A549 (cell line): ENCODE measurements at regions of chr15 and their contacts with region 1.

Region 1: GRCh38 chr15:89171136-89172072 is 50.0 kb downstream of the RLBP1 start:
- DNase-seq: peak; percentile 71 to 74
- ATAC-seq: peak; percentile 49 to 87
- H3K4me3 ChIP-seq: no peak overlapping the region
- H3K27ac ChIP-seq: peak overlapping the region in 1 of 2 experiments; percentile 22; a peak in 1 of 6 replicates
- H3K4me1 ChIP-seq: peaks cover 21% of the 10 kb centered on the region
- CTCF ChIP-seq: peak; percentile 95
- EP300 ChIP-seq: no peak
- POLR2A ChIP-seq: no peak
- RAD21 ChIP-seq: peak; percentile 86 to 94

Region 2: GRCh38 chr15:89017370-89018066 is 153.9 kb before region 1 on chr15:
- CTCF ChIA-PET with region 1: interaction called, 224 read pairs
- POLR2A ChIA-PET with region 1: no interaction called
- DNase-seq: peak; percentile 82 to 84
- ATAC-seq: peak; percentile 90 to 95
- H3K4me3 ChIP-seq: peak overlapping the region; percentile 37
- H3K27ac ChIP-seq: peak overlapping the region; percentile 68 to 79
- H3K4me1 ChIP-seq: peaks cover 17% of the 10 kb centered on the region
- CTCF ChIP-seq: peak; percentile 97
- EP300 ChIP-seq: no peak
- POLR2A ChIP-seq: no peak
- RAD21 ChIP-seq: peak; percentile 93 to 95

Region 3: GRCh38 chr15:89075846-89076245 is 95.6 kb before region 1 on chr15:
- CTCF ChIA-PET with region 1: interaction called, 28 read pairs
- POLR2A ChIA-PET with region 1: no interaction called
- DNase-seq: no peak
- ATAC-seq: no peak
- H3K4me3 ChIP-seq: no peak overlapping the region
- H3K27ac ChIP-seq: no peak overlapping the region
- H3K4me1 ChIP-seq: 0 out of 3 replicates have a peak, but pooled peaks cover 3% of the 10 kb centered on the region
- CTCF ChIP-seq: no peak
- EP300 ChIP-seq: no peak
- POLR2A ChIP-seq: no peak
- RAD21 ChIP-seq: no peak

Region 4: DNA sequence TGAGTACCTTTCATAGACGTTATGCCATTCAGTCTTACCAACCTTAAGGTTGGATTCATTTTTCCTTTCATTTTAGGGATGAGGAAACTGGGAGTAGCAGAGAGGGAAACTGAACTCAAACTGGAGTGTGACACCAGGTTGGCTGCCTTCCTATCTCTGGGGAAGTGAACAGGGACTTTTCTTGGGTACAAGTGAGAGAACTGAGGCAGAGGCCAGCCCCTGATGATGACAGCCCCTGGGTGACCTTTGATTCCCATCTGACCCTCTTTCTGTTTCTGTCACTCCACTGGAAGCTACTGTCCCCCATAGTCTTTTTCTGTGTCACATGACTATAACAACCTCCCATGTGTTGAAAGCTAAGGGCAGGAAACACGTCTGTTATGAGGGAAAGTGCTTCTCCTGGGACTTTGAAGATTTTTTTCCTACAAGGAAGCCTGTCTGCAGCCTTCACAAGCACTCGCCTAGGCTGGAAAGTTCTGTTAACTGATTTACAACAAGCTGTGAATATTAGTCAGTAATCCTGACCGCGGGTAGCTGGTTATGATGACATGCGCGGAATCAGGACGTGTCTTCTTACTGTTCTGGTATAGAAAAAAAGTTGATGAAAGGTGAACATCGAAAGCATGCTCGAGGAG is 51.8 kb before region 1 on chr15:
- CTCF ChIA-PET with region 1: interaction called, 25 read pairs
- POLR2A ChIA-PET with region 1: interaction called, 3 read pairs
- DNase-seq: peak; percentile 91 to 95
- ATAC-seq: peak; percentile 77 to 88
- H3K4me3 ChIP-seq: peak overlapping the region; percentile 16; the same call in 2 of the 3 replicates
- H3K27ac ChIP-seq: peak overlapping the region; percentile 87 to 95
- H3K4me1 ChIP-seq: peaks cover 96% of the 10 kb centered on the region
- CTCF ChIP-seq: no peak
- EP300 ChIP-seq: no peak
- POLR2A ChIP-seq: no peak
- RAD21 ChIP-seq: no peak; a peak in 1 of 5 replicates

Region 5: DNA sequence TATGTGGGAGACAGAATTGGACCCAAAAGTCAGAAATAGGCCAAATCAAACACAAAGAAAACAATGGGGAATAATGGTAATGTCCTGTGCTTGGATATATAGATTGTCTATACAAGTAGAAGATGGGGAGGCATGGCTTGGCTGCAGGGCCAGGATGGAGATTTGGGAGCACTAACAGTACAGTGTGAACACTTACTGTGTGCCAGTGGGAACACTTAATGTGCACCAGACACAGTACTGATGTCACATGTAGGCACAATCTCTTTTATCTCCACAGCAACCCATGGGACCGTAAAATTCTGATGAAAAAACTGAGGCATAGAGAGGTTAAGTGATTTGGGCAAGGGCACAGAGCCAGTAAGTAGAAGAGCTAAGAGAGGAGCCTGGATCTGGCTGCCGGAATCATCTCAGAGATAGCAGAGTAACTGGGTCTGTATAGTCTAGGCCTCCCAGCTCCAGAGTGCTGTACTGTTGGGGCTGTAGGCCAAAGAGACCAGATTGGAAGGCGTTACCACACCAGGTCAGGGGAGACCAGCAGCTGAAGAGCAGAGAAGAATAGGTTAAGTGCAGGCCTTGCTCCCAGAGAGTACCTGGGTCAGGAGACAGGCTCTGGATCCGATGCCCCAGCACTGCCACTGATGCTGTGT is 13.4 kb before region 1 on chr15:
- CTCF ChIA-PET with region 1: interaction called, 203 read pairs
- POLR2A ChIA-PET with region 1: no interaction called
- DNase-seq: no peak
- ATAC-seq: no peak; a peak in 1 of 6 replicates
- H3K4me3 ChIP-seq: no peak overlapping the region
- H3K27ac ChIP-seq: no peak overlapping the region
- H3K4me1 ChIP-seq: no peaks in the 10 kb centered on the region
- CTCF ChIP-seq: no peak
- EP300 ChIP-seq: no peak
- POLR2A ChIP-seq: no peak
- RAD21 ChIP-seq: no peak

Region 6: GRCh38 chr15:89278307-89278706 is 106.9 kb after region 1 on chr15:
- CTCF ChIA-PET with region 1: no interaction called
- POLR2A ChIA-PET with region 1: no interaction called
- DNase-seq: no peak
- ATAC-seq: no peak
- H3K4me3 ChIP-seq: no peak overlapping the region
- H3K27ac ChIP-seq: no peak overlapping the region
- H3K4me1 ChIP-seq: no peaks in the 10 kb centered on the region
- CTCF ChIP-seq: no peak
- EP300 ChIP-seq: no peak
- POLR2A ChIP-seq: no peak
- RAD21 ChIP-seq: no peak